ENCODE measurements at regions of chr4 and their contacts with region 1.

Region 1: GRCh38 chr4:98260579-98261290 is 449 bp upstream of the RAP1GDS1 start:
- DNase-seq: peak; percentile 89
- ATAC-seq: peak; percentile 90
- H3K4me3 ChIP-seq: peak overlapping the region; percentile 78 to 86
- H3K27ac ChIP-seq: peak overlapping the region; percentile 97
- H3K4me1 ChIP-seq: peaks cover 13 to 17% of the 10 kb centered on the region in 2 experiments
- H3K27me3 ChIP-seq: no peaks in the 10 kb centered on the region
- CTCF ChIP-seq: no peak
- POLR2A ChIP-seq: peak; percentile 86
- RAD21 ChIP-seq: no peak

Region 2: GRCh38 chr4:98027827-98028226 is 232.9 kb before region 1 on chr4:
- CTCF ChIA-PET with region 1: no interaction called
- POLR2A ChIA-PET with region 1: no interaction called
- RAD21 ChIA-PET with region 1: no interaction called
- intact Hi-C with region 1: no loop called
- DNase-seq: peak; percentile 64
- ATAC-seq: peak; percentile 98
- H3K4me3 ChIP-seq: no peak overlapping the region
- H3K27ac ChIP-seq: no peak overlapping the region
- H3K4me1 ChIP-seq: peaks cover 3 to 8% of the 10 kb centered on the region in 2 experiments; a peak in 3 of 4 replicates
- H3K27me3 ChIP-seq: no peaks in the 10 kb centered on the region
- CTCF ChIP-seq: peak; percentile 26 to 72 (median 64); a peak in 5 of 6 replicates
- POLR2A ChIP-seq: no peak
- RAD21 ChIP-seq: peak; percentile 39

Region 3: DNA sequence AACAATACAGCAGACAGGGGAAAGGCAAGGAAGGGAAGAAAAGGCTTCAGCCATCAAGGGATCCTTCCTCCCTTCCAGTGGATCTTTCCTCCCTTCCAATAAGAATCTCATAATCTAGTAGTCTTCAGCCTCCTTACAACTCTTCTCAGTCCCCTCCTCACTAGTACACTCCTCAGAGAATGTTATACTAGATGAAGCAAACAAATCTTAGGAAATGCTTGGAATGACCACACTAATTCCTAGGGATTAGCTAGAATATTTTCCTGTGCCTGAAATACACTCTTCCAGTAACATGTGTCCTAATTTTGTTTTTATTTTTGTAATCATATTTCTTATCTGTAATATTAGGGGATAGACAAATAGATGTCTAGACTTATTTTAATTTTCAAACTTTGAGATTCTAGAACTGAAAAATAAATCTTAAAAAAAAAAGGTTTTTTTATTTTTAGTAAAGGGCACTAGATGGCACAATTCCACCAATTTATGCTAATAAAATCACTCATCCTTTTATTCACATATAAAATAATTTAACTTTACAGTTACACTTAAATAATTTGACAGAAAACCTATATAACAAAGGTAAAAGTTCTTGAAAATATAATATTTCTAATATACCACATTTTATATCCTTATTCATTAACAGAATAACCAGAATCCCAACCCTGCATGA is 110.5 kb before region 1 on chr4:
- CTCF ChIA-PET with region 1: no interaction called
- POLR2A ChIA-PET with region 1: no interaction called
- RAD21 ChIA-PET with region 1: no interaction called
- intact Hi-C with region 1: loop called (anchors 5 kb)
- DNase-seq: no peak
- ATAC-seq: no peak
- H3K4me3 ChIP-seq: no peak overlapping the region
- H3K27ac ChIP-seq: no peak overlapping the region
- H3K4me1 ChIP-seq: no peaks in the 10 kb centered on the region
- H3K27me3 ChIP-seq: no peaks in the 10 kb centered on the region
- CTCF ChIP-seq: peak in 2 of 3 experiments; percentile 36 to 46; a peak in 2 of 6 replicates
- POLR2A ChIP-seq: no peak
- RAD21 ChIP-seq: peak; percentile 64

Region 4: DNA sequence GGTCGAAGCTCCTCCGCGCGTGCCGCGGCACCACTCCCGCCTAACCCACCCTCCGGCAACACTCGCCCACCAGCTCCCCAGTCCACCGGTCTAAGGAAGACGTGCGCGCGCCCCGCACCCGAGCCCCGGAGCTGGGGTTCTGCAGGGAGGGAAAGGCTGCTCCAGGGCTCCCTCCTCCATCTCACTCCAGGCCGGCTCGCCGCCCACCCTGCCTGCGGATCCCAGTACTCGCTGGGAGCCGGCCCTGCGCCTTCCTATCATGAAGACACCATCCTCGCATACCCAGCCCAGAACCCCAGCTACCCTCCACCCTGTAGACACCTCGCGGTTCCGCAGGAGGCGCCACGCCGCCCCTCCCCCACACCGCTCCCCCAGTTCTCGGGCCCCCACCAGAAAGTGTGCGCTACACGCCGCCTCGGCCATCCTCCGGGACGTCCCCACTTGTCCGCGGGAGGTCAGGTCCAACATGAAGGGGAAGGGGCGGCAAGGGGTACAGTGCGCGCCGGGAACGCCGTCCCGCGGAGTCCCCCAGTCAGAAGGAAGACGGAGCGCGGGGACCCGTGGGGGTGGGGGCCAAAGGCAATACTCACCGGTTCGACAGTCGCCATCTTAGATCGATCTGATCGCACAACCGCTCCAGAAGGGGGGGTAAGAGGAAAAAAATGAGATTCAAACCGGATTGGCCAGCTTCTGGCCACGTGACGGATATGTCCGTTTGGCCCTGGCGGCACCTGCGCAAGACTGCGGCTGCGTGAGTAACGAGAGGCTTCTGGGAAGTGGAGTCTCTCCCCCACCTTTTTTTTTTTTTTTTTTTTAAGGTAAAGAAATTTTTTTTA is 668.0 kb after region 1 on chr4 and contains the start of gene EIF4E:
- CTCF ChIA-PET with region 1: no interaction called
- POLR2A ChIA-PET with region 1: no interaction called
- RAD21 ChIA-PET with region 1: no interaction called
- intact Hi-C with region 1: loop called (anchors 2 kb)
- DNase-seq: peak; percentile 99
- ATAC-seq: peak; percentile 73
- H3K4me3 ChIP-seq: peak within 1 kb of the TSS; percentile 90 to 93
- H3K27ac ChIP-seq: peak within 1 kb of the TSS; percentile 95
- H3K4me1 ChIP-seq: peaks cover 14 to 29% of the 10 kb centered on the region in 2 experiments
- H3K27me3 ChIP-seq: no peaks in the 10 kb centered on the region
- CTCF ChIP-seq: peak in 2 of 3 experiments; percentile 19 to 24; a peak in 2 of 6 replicates
- POLR2A ChIP-seq: peak; percentile 32
- RAD21 ChIP-seq: no peak
- total RNA-seq, gene EIF4E: 148 TPM

Measured in HCT116 (cell line).